ENCODE measurements at regions of chr14 and their contacts with region 1.

Region 1: DNA sequence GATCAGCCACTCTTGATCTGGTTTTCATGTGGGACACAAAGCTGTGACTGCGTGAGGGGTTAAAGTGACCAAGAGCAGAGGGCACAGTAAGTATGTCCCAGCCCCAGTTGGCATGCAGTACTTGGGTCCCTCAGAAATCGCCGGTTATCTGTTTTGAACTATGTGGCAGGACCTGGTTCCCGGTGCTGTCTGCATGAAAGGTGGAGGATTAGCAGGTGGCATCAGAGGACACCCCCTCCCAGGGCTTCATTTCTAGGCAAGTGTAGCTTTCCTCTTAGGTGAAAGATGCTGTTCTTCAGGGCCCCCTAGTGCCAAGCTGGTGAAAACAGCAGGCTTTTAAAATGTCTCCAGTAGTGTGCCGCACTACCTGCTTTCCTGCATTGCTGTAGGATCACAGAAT is 57.1 kb downstream of the ATG14 start:
- DNase-seq: peak; percentile 76 to 87 (median 79)
- H3K4me3 ChIP-seq: peak overlapping the region in 1 of 2 donors; percentile 35
- H3K4me3 Mint-ChIP-seq: peak overlapping the region; percentile 67 to 92 (median 83)
- H3K27ac ChIP-seq: peak overlapping the region; percentile 62
- H3K27ac Mint-ChIP-seq: peak overlapping the region; percentile 92 to 98 (median 96)
- H3K4me1 ChIP-seq: peaks cover 36% of the 10 kb centered on the region
- H3K4me1 Mint-ChIP-seq: peaks cover 24 to 39% (median 30%) of the 10 kb centered on the region in 4 donors
- H3K27me3 ChIP-seq: no peaks in the 10 kb centered on the region
- H3K27me3 Mint-ChIP-seq: no peaks in the 10 kb centered on the region

Region 2: DNA sequence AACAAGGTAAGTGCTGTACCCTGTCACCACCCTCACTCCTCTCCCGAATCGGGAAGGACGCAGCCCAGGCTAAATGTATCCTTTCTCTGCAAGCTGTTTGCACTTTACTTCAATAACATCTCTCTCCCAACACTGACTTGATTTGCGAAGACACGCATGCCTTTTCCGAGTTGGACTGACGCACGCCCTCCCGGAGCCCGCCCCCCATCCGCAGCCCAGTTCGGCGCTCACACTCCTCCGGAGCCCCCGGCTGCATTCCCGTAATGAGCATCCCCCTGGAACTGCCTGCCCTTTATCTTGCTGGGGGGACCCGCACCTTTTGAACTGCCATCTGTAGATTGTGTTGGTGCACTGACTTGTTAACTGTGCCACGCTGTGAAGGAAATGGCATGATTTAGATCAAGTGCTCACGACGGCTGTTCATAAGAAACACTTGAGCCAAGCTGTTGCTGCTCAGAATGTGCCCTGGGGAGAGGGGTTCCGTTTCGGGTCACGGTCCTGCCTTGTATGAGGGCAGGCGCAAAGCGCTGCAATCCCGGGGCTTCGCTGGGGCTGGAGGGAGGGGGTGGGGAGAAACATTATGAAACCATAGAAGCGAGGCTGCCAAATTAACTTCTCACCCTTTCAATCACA is 1134.3 kb before region 1 on chr14:
- CTCF ChIA-PET with region 1: no interaction called
- POLR2A ChIA-PET with region 1: no interaction called
- intact Hi-C with region 1: no loop called
- DNase-seq: no peak
- H3K4me3 ChIP-seq: no peak overlapping the region
- H3K4me3 Mint-ChIP-seq: peak overlapping the region in 7 of 8 donors; percentile 52 to 79 (median 68)
- H3K27ac ChIP-seq: no peak overlapping the region
- H3K27ac Mint-ChIP-seq: no peak overlapping the region
- H3K4me1 ChIP-seq: no peaks in the 10 kb centered on the region
- H3K4me1 Mint-ChIP-seq: peaks cover 4 to 16% (median 11%) of the 10 kb centered on the region in 4 donors
- H3K27me3 ChIP-seq: peaks cover 5% of the 10 kb centered on the region
- H3K27me3 Mint-ChIP-seq: peaks cover 42 to 52% of the 10 kb centered on the region in 2 donors

Region 3: DNA sequence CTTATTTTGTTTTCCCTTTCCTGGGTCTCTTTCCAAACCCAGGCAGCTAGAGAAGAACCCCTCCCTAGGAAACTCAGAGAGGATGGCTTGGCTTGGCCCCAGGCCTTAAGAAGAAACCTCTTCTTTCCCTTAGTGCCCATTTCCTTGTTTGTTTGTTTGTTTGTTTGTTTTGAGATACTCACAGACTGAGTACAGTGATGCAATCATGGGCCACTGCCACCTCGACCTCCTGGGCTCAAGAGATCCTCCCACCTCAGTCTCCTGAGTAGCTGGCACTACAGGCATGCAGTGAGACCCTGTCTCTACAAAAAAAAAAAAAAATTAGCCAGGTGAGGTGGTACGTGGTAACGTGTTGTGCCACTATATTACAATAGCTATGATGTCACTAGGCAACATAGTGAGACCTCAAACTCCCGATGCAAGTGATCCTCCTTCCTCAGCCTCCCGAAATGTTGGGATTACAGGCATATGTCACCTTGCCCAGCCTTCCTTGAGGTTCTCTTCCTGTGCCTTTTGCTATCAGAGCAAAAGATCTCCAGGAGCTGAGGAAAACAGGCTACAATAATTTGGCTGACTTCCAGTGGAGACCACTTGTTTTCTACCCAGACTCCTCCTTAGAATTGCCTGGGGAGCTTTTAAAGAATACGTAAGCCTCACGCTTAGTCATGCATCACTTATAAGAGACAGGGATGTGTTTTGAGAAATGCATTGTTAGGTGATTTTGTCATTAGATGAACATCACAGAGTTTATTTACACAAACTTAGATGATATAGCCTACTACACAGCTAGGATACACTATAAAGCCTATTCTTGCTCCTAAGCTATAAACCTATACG is 260.0 kb before region 1 on chr14:
- CTCF ChIA-PET with region 1: no interaction called
- POLR2A ChIA-PET with region 1: no interaction called
- intact Hi-C with region 1: loop called (anchors 1 kb)
- DNase-seq: no peak
- H3K4me3 ChIP-seq: no peak overlapping the region
- H3K4me3 Mint-ChIP-seq: no peak overlapping the region
- H3K27ac ChIP-seq: no peak overlapping the region
- H3K27ac Mint-ChIP-seq: no peak overlapping the region
- H3K4me1 ChIP-seq: peaks cover 21% of the 10 kb centered on the region
- H3K4me1 Mint-ChIP-seq: peaks cover 19 to 23% (median 20%) of the 10 kb centered on the region in 4 donors
- H3K27me3 ChIP-seq: no peaks in the 10 kb centered on the region
- H3K27me3 Mint-ChIP-seq: no peaks in the 10 kb centered on the region

Region 4: DNA sequence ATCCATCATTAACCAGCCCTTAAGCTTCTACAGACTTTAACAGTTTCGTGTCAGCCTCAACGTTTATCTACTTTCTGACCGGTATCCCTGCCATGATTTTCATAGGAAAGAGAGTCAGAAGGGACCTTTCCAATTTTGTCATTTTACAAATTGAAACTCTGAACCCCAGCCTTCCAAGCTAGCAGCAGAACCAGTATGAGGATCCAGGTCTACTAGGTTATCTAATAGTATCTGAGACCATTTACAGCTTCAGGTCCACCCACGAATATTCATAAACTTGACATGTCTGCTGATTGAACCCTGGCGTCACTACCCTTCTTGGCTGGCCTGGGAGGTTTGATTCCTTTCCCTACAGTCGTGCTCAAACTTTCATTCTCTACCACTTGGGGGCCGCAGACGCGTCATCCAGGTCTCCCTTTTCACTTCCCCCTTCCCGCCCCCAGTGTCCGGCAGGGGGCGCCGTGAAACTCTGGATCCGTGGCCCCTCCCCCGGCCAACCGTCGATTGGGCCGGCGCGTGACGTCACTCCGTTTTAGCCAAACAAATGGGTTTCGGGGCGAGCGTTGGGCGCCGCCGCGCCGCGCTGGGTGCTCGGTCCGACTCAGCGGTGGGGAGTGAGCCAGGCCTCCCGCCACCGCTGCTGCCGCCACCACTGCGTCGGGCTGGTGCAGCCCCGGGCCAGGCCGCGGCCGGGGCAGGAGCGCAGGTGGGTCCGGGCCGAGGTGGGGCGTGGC is 83.5 kb before region 1 on chr14 and contains the start of gene FBXO34:
- CTCF ChIA-PET with region 1: interaction called, 348 read pairs
- POLR2A ChIA-PET with region 1: interaction called, 61 read pairs
- intact Hi-C with region 1: loop called (anchors 1 kb)
- DNase-seq: peak; percentile 97 to 100 (median 98)
- H3K4me3 ChIP-seq: peak within 1 kb of the TSS; percentile 76 to 90
- H3K4me3 Mint-ChIP-seq: peak within 1 kb of the TSS; percentile 89 to 95 (median 92)
- H3K27ac ChIP-seq: peak within 1 kb of the TSS; percentile 91
- H3K27ac Mint-ChIP-seq: peak within 1 kb of the TSS; percentile 93 to 96 (median 95)
- H3K4me1 ChIP-seq: peaks cover 41% of the 10 kb centered on the region
- H3K4me1 Mint-ChIP-seq: peaks cover 31 to 48% (median 36%) of the 10 kb centered on the region in 4 donors
- H3K27me3 ChIP-seq: no peaks in the 10 kb centered on the region
- H3K27me3 Mint-ChIP-seq: no peaks in the 10 kb centered on the region
- total RNA-seq, gene FBXO34: 42.1 to 43.6 TPM

Region 5: GRCh38 chr14:55309761-55310365 is 44.6 kb before region 1 on chr14:
- CTCF ChIA-PET with region 1: interaction called, 16 read pairs
- POLR2A ChIA-PET with region 1: no interaction called
- intact Hi-C with region 1: loop called (anchors 5 kb)
- DNase-seq: no peak
- H3K4me3 ChIP-seq: no peak overlapping the region
- H3K4me3 Mint-ChIP-seq: no peak overlapping the region
- H3K27ac ChIP-seq: no peak overlapping the region
- H3K27ac Mint-ChIP-seq: peak overlapping the region in 3 of 7 donors; percentile 5 to 52 (median 43)
- H3K4me1 ChIP-seq: no peaks in the 10 kb centered on the region
- H3K4me1 Mint-ChIP-seq: peaks cover 25 to 57% (median 33%) of the 10 kb centered on the region in 4 donors
- H3K27me3 ChIP-seq: no peaks in the 10 kb centered on the region
- H3K27me3 Mint-ChIP-seq: no peaks in the 10 kb centered on the region

Region 6: GRCh38 chr14:55339770-55340169 is 14.7 kb before region 1 on chr14:
- CTCF ChIA-PET with region 1: interaction called, 80 read pairs
- POLR2A ChIA-PET with region 1: interaction called, 47 read pairs
- intact Hi-C with region 1: no loop called
- DNase-seq: peak in 1 of 5 donors; percentile 14
- H3K4me3 ChIP-seq: no peak overlapping the region
- H3K4me3 Mint-ChIP-seq: peak overlapping the region in 7 of 8 donors; percentile 21 to 60 (median 31)
- H3K27ac ChIP-seq: no peak overlapping the region
- H3K27ac Mint-ChIP-seq: peak overlapping the region; percentile 38 to 96 (median 83)
- H3K4me1 ChIP-seq: peaks cover 71% of the 10 kb centered on the region
- H3K4me1 Mint-ChIP-seq: peaks cover 55 to 92% (median 70%) of the 10 kb centered on the region in 4 donors
- H3K27me3 ChIP-seq: no peaks in the 10 kb centered on the region
- H3K27me3 Mint-ChIP-seq: no peaks in the 10 kb centered on the region

Region 7: DNA sequence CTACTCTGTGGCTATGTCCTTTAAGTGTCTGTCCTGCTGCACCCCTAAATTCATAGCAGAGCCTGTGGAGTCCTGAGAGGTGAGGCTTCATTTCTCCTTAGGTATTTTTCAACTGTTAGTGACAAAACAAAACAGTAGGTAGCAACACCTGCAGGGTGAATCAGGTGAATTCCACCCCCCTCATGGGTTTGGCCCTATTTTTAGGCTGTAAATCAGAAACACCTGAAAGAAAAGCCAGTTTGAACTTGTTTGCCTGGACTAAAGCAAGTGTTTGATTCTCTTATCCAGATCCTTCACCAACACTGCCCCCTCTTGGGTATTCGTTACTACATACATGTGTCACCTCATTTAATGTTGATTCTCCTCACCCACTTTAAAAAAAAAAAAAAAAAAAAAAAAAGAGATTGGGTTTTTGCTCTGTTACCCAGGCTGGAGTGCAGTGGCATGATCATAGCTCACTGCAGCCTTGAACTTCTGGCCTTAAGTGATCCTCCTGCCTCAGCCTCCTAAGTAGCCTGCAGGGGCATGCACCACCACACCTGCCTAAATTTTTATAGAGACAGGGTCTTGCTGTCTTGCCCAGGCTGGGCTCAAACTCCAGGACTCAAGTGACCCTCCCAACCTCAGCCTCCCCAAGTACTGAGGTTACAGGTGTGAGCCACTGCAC is 75.7 kb after region 1 on chr14:
- CTCF ChIA-PET with region 1: interaction called, 30 read pairs
- POLR2A ChIA-PET with region 1: no interaction called
- intact Hi-C with region 1: loop called (anchors 1 kb)
- DNase-seq: peak; percentile 65 to 79 (median 73)
- H3K4me3 ChIP-seq: no peak overlapping the region
- H3K4me3 Mint-ChIP-seq: peak overlapping the region in 1 of 8 donors; percentile 43
- H3K27ac ChIP-seq: no peak overlapping the region
- H3K27ac Mint-ChIP-seq: peak overlapping the region in 6 of 7 donors; percentile 39 to 91 (median 72)
- H3K4me1 ChIP-seq: peaks cover 32% of the 10 kb centered on the region
- H3K4me1 Mint-ChIP-seq: peaks cover 32 to 40% (median 34%) of the 10 kb centered on the region in 4 donors
- H3K27me3 ChIP-seq: no peaks in the 10 kb centered on the region
- H3K27me3 Mint-ChIP-seq: no peaks in the 10 kb centered on the region

Region 8: DNA sequence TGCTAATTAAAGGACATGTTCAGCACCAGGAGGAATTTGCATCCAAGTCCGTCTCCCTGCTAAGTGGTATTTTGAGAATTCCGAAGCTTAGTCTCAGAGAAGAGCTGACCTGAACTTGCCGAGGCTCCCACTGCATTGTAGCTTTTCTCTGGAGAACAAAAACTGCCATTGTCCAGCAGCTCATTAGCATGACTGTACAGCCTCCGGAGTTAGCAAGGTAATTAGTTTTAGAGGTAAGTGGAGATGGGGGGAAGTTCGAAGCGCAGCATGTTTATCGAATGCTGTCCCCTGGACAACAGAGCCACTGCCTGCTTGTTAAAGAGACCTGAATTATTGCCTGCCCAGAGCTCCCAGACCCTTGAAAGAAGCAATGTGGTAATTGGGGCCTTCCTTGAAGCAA is 603.5 kb after region 1 on chr14:
- CTCF ChIA-PET with region 1: no interaction called
- POLR2A ChIA-PET with region 1: no interaction called
- intact Hi-C with region 1: no loop called
- DNase-seq: no peak
- H3K4me3 ChIP-seq: no peak overlapping the region
- H3K4me3 Mint-ChIP-seq: no peak overlapping the region
- H3K27ac ChIP-seq: no peak overlapping the region
- H3K27ac Mint-ChIP-seq: no peak overlapping the region
- H3K4me1 ChIP-seq: no peaks in the 10 kb centered on the region
- H3K4me1 Mint-ChIP-seq: no peaks in the 10 kb centered on the region
- H3K27me3 ChIP-seq: no peaks in the 10 kb centered on the region
- H3K27me3 Mint-ChIP-seq: peaks cover 3% of the 10 kb centered on the region in 2 donors

Measured in CD4-positive, alpha-beta memory T cell (primary cell).